Calu3 (cell line): ENCODE measurements at regions of chr5 and their contacts with region 1.

Region 1: DNA sequence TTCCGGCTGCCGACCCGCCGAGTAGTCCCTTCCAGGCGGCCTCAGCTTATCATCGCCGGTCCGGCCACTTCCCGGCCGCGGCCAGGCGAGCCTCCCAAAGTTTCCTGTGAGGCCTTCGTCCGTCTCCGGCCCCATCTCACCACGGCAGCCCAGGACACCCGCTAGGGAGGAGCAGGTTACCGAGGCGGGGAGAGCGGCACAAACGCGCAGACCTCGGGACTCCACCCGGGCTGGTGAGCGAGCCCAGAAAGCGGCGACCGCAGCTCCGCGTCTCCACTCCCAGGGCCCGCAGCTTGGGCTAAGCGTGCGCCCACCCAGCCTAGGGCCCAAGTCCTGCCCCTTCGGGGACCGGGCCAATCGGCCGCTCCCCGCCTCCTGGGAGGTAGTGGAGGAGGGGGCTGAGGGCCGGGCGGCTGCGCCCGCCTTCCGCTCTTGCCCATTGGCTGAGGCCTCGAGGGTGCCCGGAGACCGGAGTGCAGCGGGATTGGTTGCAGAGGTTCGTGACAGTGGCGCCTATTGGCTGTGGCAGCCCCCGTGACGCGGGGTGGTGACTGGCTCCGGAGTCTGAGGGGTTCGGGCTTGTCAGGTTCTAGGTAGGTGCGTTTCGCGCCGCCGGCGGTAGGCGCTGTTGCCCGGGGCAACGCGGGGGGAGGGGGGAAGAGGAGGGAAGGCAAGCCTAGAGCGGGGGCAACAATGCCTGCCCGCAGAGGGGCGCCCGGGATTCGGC is 867 bp downstream of the FER start:
- DNase-seq: peak; percentile 99
- H3K4me3 Mint-ChIP-seq: peak overlapping the region; percentile 87
- H3K27ac Mint-ChIP-seq: peak overlapping the region; percentile 99
- H3K4me1 Mint-ChIP-seq: peaks cover 22% of the 10 kb centered on the region
- H3K27me3 Mint-ChIP-seq: no peaks in the 10 kb centered on the region
- CTCF ChIP-seq: no peak

Region 2: DNA sequence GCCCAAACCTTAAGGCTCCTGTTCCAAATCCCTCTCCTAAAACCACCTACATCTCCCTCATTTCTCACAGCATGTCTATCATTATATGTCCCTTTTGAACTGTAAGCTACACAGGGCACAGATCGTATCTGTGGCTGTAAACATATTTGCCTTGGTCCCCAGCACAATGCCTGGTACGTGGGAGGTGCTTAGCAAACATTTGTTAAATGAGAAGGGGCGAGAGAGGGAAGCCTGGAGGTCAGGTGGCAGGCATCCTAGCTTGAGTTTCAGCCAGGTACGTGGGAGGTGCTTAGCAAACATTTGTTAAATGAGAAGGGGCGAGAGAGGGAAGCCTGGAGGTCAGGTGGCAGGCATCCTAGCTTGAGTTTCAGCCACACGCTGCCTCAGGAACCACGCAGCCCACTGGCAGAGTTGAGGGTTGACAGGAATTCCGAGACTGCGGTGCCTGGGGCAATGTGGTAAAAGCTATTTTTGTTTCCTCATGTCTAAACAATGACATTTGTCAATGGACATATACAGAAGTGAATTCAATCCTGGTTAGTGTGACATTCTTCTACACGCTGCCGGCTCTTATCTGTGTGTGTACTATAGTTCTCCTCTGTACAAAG is 1191.4 kb before region 1 on chr5:
- CTCF ChIA-PET with region 1: no interaction called
- intact Hi-C with region 1: loop called (anchors 5 kb)
- DNase-seq: peak; percentile 92
- H3K4me3 Mint-ChIP-seq: peak overlapping the region; percentile 45
- H3K27ac Mint-ChIP-seq: peak overlapping the region; percentile 80
- H3K4me1 Mint-ChIP-seq: peaks cover 87% of the 10 kb centered on the region
- H3K27me3 Mint-ChIP-seq: no peaks in the 10 kb centered on the region
- CTCF ChIP-seq: no peak

Region 3: DNA sequence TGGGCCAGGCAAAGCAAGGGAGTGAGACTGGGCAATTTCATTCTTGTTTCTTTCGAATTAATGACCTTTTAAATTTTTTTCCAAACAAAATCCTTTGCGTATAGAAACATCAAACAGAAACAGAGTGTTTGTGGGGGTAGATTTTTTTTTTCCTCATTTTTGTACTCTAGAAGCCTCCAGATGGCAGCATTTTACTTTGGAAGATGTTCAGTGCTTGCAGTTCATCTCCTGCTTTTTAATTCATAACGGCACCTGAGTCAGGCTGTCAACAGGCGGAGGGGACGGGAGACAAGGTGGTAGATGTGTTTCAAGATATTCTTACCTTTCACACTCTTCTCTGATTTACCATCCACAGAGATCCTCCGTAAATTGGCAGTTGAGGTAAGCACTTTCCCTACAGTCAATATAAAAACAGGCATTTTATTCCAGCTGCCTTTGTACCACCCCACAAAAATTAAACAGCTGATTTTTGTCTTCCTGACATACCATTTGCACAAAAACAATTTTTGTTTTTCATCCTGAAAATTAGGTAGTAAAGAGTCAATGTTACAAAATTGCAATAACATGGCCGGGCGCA is 267.1 kb before region 1 on chr5:
- CTCF ChIA-PET with region 1: no interaction called
- intact Hi-C with region 1: no loop called
- DNase-seq: peak; percentile 27
- H3K4me3 Mint-ChIP-seq: no peak overlapping the region
- H3K27ac Mint-ChIP-seq: no peak overlapping the region
- H3K4me1 Mint-ChIP-seq: no peaks in the 10 kb centered on the region
- H3K27me3 Mint-ChIP-seq: peaks cover under 1% of the 10 kb centered on the region
- CTCF ChIP-seq: no peak

Region 4: GRCh38 chr5:108727651-108728565 is 20.7 kb before region 1 on chr5:
- CTCF ChIA-PET with region 1: interaction called, 13 read pairs
- intact Hi-C with region 1: loop called (anchors 2 kb)
- DNase-seq: peak; percentile 95
- H3K4me3 Mint-ChIP-seq: peak overlapping the region; percentile 94
- H3K27ac Mint-ChIP-seq: peak overlapping the region; percentile 90
- H3K4me1 Mint-ChIP-seq: peaks cover 39% of the 10 kb centered on the region
- H3K27me3 Mint-ChIP-seq: no peaks in the 10 kb centered on the region
- CTCF ChIP-seq: no peak

Region 5: GRCh38 chr5:109028608-109029299 is 280.2 kb after region 1 on chr5:
- CTCF ChIA-PET with region 1: no interaction called
- intact Hi-C with region 1: no loop called
- DNase-seq: no peak
- H3K4me3 Mint-ChIP-seq: no peak overlapping the region
- H3K27ac Mint-ChIP-seq: no peak overlapping the region
- H3K4me1 Mint-ChIP-seq: no peaks in the 10 kb centered on the region
- H3K27me3 Mint-ChIP-seq: no peaks in the 10 kb centered on the region
- CTCF ChIP-seq: no peak

Region 6: DNA sequence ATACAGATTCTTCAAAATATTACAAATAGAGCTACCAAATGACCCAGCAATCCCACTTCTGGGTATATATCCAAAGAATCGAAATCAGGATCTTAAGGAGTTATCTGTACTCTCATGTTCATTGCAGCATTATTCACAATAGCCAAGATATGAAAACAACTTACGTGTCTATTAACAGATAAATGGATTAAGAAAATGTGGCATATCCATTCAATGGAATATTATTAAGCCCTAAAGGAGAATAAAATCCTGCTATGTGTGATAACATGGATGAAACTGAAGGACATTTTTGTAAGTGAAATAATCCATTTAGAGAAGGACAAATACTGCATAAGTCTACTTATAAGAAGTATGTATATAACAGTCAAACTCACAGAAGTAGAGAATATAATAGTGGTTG is 1527.3 kb after region 1 on chr5:
- CTCF ChIA-PET with region 1: no interaction called
- intact Hi-C with region 1: no loop called
- DNase-seq: no peak
- H3K4me3 Mint-ChIP-seq: no peak overlapping the region
- H3K27ac Mint-ChIP-seq: no peak overlapping the region
- H3K4me1 Mint-ChIP-seq: no peaks in the 10 kb centered on the region
- H3K27me3 Mint-ChIP-seq: no peaks in the 10 kb centered on the region
- CTCF ChIP-seq: no peak